ENCODE measurements at regions of chr11 and their contacts with region 1.

Region 1: GRCh38 chr11:78365381-78365792 is 52.2 kb downstream of the GAB2 start:
- DNase-seq: no peak
- ATAC-seq: no peak

Region 2: GRCh38 chr11:78350646-78351165 is 14.7 kb before region 1 on chr11:
- intact Hi-C with region 1: loop called (anchors 2 kb)
- DNase-seq: no peak
- ATAC-seq: peak; percentile 65